ENCODE measurements at regions of chr15 and their contacts with region 1.

Region 1: GRCh38 chr15:53811530-53811929 is 52.1 kb upstream of the WDR72 start:
- DNase-seq: no peak
- H3K4me3 ChIP-seq: no peak overlapping the region
- H3K27ac ChIP-seq: no peak overlapping the region
- H3K27me3 ChIP-seq: no peaks in the 10 kb centered on the region
- CTCF ChIP-seq: no peak

Region 2: DNA sequence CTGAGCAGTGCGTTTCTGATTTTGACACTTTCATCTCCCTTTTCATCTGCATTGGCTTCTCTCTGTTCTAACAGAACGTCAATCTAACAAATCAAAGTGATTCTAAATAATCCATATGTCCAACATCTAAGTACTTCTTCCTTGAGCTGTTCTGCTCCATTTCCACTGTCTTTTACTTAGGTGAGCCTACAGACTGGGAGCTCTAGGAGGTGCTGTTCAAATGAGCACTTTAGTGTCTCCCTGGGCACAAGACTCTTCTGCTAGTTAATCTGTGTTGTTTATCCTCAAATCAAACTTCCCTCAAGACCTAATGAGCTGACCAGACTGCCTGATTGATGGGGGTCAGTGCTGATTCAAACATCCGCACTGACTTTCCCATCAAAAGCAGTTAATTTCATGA is 460.2 kb before region 1 on chr15:
- CTCF ChIA-PET with region 1: no interaction called
- POLR2A ChIA-PET with region 1: interaction called, 11 read pairs
- DNase-seq: no peak
- H3K4me3 ChIP-seq: no peak overlapping the region
- H3K27ac ChIP-seq: no peak overlapping the region
- H3K27me3 ChIP-seq: no peaks in the 10 kb centered on the region
- CTCF ChIP-seq: no peak

Measured in AG04450 (cell line).